ENCODE measurements at regions of chr22 and their contacts with region 1.

Region 1: GRCh38 chr22:50562523-50563412 is at the start of gene SYCE3:
- DNase-seq: peak; percentile 98
- H3K4me3 Mint-ChIP-seq: peak within 1 kb of the TSS; percentile 83
- H3K27ac Mint-ChIP-seq: peak within 1 kb of the TSS; percentile 83
- H3K4me1 Mint-ChIP-seq: peaks cover 22% of the 10 kb centered on the region
- H3K27me3 Mint-ChIP-seq: peaks cover 66% of the 10 kb centered on the region

Region 2: GRCh38 chr22:50396751-50397370 is 165.9 kb before region 1 on chr22:
- CTCF ChIA-PET with region 1: no interaction called
- DNase-seq: no peak
- H3K4me3 Mint-ChIP-seq: no peak overlapping the region
- H3K27ac Mint-ChIP-seq: peak overlapping the region; percentile 5
- H3K4me1 Mint-ChIP-seq: peaks cover 31% of the 10 kb centered on the region
- H3K27me3 Mint-ChIP-seq: no peaks in the 10 kb centered on the region

Region 3: DNA sequence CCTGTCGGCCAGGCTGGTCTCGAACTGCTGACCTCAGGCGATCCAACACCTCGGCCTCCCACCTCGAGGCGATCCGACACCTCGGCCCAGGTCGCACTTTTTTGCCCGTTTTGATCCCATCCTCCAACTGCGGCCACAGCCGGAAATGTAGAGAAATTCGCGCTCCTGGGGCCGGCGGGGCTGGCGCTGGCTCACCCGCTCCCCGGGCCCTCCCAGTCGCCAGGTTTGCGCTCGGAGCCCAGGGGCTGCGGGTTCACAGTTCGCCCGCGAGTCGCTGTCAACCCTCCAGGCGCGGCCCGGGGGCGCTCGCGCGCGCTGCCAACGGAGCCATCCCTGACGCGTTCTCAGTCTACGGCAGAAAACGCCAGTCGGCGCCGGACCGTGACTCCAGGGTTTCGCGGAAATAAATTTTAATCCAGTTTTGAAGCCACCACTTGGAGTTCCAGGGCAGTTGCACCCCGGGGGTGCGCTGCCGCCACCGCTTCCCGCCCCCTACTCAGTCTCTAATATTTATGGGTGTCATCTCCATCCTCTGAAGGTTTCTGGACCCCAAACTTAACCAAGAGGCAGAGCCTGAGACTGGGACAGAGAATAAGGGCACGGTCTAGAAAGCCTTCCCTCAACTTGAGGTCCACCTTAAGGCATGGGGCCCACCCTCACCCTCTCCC is 18.6 kb before region 1 on chr22:
- CTCF ChIA-PET with region 1: interaction called, 10 read pairs
- DNase-seq: peak; percentile 88
- H3K4me3 Mint-ChIP-seq: peak overlapping the region; percentile 53
- H3K27ac Mint-ChIP-seq: peak overlapping the region; percentile 85
- H3K4me1 Mint-ChIP-seq: peaks cover 62% of the 10 kb centered on the region
- H3K27me3 Mint-ChIP-seq: no peaks in the 10 kb centered on the region

Region 4: DNA sequence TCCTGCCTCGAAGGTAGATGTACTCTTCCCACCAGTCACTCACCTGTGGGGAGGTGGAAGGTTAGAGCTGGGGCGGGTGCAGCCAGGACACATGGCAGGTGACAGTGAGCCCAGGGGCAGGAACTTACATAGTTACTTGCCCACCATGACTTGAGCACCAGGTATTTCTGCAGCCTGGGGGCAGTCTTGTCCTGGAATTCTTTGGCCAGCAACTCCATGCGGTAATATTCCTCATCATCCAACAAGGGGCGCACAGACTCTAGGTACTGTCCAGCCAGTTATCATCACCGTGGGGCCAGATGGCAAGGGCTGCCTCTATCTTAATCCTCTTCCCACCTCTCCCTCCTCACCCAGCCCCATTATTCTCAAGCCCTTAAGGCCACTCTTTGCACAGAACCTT is 13.3 kb after region 1 on chr22:
- CTCF ChIA-PET with region 1: interaction called, 10 read pairs
- DNase-seq: no peak
- H3K4me3 Mint-ChIP-seq: no peak overlapping the region
- H3K27ac Mint-ChIP-seq: no peak overlapping the region
- H3K4me1 Mint-ChIP-seq: peaks cover 30% of the 10 kb centered on the region
- H3K27me3 Mint-ChIP-seq: no peaks in the 10 kb centered on the region

Region 5: GRCh38 chr22:50612528-50613221 is 49.9 kb after region 1 on chr22:
- CTCF ChIA-PET with region 1: no interaction called
- DNase-seq: peak; percentile 42
- H3K4me3 Mint-ChIP-seq: no peak overlapping the region
- H3K27ac Mint-ChIP-seq: no peak overlapping the region
- H3K4me1 Mint-ChIP-seq: peaks cover 14% of the 10 kb centered on the region
- H3K27me3 Mint-ChIP-seq: peaks cover 65% of the 10 kb centered on the region